ENCODE measurements at regions of chr9 and their contacts with region 1.

Region 1: DNA sequence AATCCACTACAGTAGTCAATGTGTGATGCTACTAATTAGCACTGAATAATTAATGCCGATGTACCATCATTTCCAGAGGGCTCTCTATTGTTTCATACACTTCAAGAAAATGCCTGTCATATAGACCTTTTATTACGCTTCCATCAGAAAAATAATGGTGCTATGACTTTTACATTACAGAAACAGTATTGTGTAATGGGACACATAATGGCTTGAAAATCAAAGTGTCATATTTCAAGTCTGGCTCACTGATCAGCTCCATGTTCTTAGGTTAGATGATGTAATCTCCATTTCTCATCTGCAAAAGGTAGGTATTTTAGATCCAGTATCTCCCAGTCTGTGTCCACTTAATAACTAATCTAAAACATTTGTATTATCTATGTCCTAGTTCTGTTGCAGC is 990.6 kb upstream of the TYRP1 start:
- DNase-seq: no peak
- ATAC-seq: no peak

Region 2: DNA sequence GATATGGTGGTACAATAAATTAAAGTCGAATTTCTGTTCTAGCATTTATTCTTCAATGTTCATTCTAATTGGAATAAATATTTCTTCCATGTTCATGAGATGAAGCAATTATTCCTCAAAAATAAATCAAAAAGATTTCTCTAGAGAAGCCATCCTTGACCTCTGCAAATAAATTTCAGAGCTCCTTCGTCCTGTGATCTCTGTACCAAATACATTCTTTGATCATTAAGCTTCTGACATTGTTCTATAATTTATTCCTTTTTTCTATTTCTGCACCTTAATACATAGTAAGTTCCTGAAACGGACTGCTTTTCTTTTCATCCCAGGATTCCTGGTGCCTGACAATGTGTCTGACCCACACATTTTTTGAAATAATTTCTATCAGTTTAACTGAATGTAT is 48.7 kb before region 1 on chr9:
- intact Hi-C with region 1: no loop called
- DNase-seq: no peak
- ATAC-seq: no peak

Region 3: DNA sequence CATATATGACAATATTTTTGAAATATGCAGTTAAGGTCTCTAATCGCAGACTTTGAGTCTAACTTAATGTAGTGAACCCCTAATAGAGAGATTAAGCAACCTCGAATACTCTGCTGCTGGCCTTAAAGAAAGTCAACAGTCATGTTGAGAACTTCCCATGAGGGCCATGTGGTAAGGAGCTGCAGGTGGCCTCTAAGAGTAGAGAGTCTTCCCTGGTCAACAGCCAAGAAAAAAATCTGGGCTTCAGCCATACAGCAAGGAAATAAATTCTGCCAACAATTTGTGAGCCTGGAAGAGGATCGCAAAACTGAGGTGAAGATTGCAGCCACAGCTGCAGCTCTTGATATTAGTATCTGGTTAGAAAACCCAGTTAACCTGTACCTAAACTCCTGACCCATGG is 55.5 kb after region 1 on chr9:
- intact Hi-C with region 1: loop called in 1 of 2 experiments (anchors 10 kb)
- DNase-seq: no peak
- ATAC-seq: peak; percentile 19 to 49